ENCODE measurements at regions of chr15 and their contacts with region 1.

Region 1: GRCh38 chr15:38367476-38367875 is 86.5 kb upstream of the FAM98B start:
- DNase-seq: no peak
- CTCF ChIP-seq: no peak

Region 2: GRCh38 chr15:38002883-38003477 is 364.5 kb before region 1 on chr15:
- in situ Hi-C with region 1: loop called (anchors 10 kb)
- DNase-seq: peak; percentile 37
- CTCF ChIP-seq: peak; percentile 77

Region 3: GRCh38 chr15:38308797-38309196 is 58.7 kb before region 1 on chr15:
- in situ Hi-C with region 1: no loop called
- DNase-seq: no peak
- CTCF ChIP-seq: no peak

Measured in GM13977 (cell line).